Panc1 (cell line): ENCODE measurements at regions of chr2 and their contacts with region 1.

Region 1: GRCh38 chr2:109575373-109575772 is 38.4 kb downstream of the SEPTIN10 start:
- DNase-seq: no peak
- ATAC-seq: no peak
- H3K4me3 ChIP-seq: no peak overlapping the region
- H3K27ac ChIP-seq: no peak overlapping the region
- H3K4me1 ChIP-seq: no peaks in the 10 kb centered on the region
- H3K27me3 ChIP-seq: no peaks in the 10 kb centered on the region
- CTCF ChIP-seq: no peak

Region 2: DNA sequence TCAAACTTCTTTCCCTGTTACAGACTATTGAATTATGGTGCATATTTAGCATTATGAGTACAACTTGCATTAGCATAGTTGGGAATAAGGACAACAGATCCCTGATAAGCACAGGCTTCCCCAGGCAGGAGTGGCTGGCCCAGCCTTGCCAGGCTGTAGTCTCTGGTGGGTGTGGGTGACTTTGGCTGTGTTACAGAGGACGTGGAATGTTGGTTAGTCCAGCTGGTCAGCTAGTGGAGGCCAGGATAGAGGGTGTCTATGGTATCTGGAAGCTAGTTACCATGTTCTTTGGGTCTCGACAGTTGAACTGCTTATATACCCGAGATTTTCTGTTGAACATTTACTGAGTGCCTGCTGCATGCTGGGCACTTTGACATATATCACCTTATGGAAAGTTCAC is 441.6 kb before region 1 on chr2:
- CTCF ChIA-PET with region 1: no interaction called
- POLR2A ChIA-PET with region 1: interaction called, 11 read pairs
- in situ Hi-C with region 1: no loop called
- intact Hi-C with region 1: no loop called
- DNase-seq: no peak
- ATAC-seq: no peak
- H3K4me3 ChIP-seq: no peak overlapping the region
- H3K27ac ChIP-seq: no peak overlapping the region
- H3K4me1 ChIP-seq: peaks cover 40% of the 10 kb centered on the region
- H3K27me3 ChIP-seq: peaks cover 2% of the 10 kb centered on the region
- CTCF ChIP-seq: no peak

Region 3: DNA sequence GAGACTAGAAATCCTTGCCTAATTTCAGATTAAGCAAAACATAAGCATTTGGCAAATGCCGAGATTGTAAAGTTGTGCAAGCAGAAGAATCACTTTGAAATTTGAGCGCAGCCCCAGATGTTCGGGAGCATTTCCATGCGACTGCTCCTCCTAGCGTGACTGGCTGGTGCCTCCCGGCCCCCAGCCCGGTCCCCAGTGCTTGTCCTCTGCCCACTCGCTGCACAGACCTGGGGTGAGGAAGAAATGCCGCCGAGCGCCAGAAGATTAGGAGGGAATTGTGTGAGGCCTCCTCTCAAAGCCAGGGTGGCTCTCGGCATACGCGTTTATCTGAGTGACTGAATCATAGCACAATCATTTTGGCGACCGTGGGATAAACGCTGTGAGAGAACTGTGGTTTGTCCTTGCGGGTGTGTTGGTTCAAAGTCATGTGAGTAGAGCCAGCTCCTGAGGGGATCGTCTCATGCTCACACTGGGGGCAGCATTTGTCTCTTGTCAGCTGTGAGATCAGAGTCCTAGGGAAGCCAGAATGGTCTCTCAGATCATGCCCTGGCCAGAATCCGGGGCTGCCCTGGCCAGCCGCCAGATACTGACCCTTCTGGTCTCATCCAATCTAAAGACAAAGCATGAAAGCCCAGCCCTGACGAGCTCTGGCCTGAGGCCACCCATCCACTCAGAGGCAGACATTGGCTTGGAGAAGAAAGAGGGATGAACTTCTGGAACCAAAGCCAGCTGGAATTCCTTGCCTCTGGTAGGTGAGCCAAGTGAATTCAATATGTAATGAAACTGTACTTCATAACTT is 257.0 kb before region 1 on chr2:
- CTCF ChIA-PET with region 1: no interaction called
- POLR2A ChIA-PET with region 1: no interaction called
- in situ Hi-C with region 1: no loop called
- intact Hi-C with region 1: no loop called
- DNase-seq: no peak
- ATAC-seq: no peak
- H3K4me3 ChIP-seq: no peak overlapping the region
- H3K27ac ChIP-seq: no peak overlapping the region
- H3K4me1 ChIP-seq: no peaks in the 10 kb centered on the region; the same call in 1 of the 2 replicates
- H3K27me3 ChIP-seq: 0 out of 2 replicates have a peak, but pooled peaks cover 2% of the 10 kb centered on the region
- CTCF ChIP-seq: no peak

Region 4: GRCh38 chr2:109331896-109332848 is 243.2 kb before region 1 on chr2:
- CTCF ChIA-PET with region 1: no interaction called
- POLR2A ChIA-PET with region 1: no interaction called
- in situ Hi-C with region 1: no loop called
- intact Hi-C with region 1: no loop called
- DNase-seq: no peak
- ATAC-seq: peak; percentile 85
- H3K4me3 ChIP-seq: no peak overlapping the region
- H3K27ac ChIP-seq: peak overlapping the region; percentile 12; the same call in 1 of the 2 replicates
- H3K4me1 ChIP-seq: peaks cover 12% of the 10 kb centered on the region
- H3K27me3 ChIP-seq: 0 out of 2 replicates have a peak, but pooled peaks cover 2% of the 10 kb centered on the region
- CTCF ChIP-seq: no peak

Region 5: GRCh38 chr2:109637749-109638570 is 62.6 kb after region 1 on chr2:
- CTCF ChIA-PET with region 1: no interaction called
- POLR2A ChIA-PET with region 1: no interaction called
- in situ Hi-C with region 1: no loop called
- intact Hi-C with region 1: no loop called
- DNase-seq: no peak
- ATAC-seq: no peak
- H3K4me3 ChIP-seq: no peak overlapping the region
- H3K27ac ChIP-seq: no peak overlapping the region
- H3K4me1 ChIP-seq: no peaks in the 10 kb centered on the region
- H3K27me3 ChIP-seq: no peaks in the 10 kb centered on the region
- CTCF ChIP-seq: no peak